Activated T-helper 1 cell treated with anti-CD3 and anti-CD28 coated beads, Interleukin-12 subunit alpha, Interleukin-12 subunit beta, Interleukin-2, Interleukin-4 antibody, amounts not matched to agents 30 ng/mL and 10 ng/mL and 1 ng/mL, durations not matched to agents 14 hours and 24 hours and 36 hours (primary cell): ENCODE measurements at regions of chr2 and their contacts with region 1.

Region 1: DNA sequence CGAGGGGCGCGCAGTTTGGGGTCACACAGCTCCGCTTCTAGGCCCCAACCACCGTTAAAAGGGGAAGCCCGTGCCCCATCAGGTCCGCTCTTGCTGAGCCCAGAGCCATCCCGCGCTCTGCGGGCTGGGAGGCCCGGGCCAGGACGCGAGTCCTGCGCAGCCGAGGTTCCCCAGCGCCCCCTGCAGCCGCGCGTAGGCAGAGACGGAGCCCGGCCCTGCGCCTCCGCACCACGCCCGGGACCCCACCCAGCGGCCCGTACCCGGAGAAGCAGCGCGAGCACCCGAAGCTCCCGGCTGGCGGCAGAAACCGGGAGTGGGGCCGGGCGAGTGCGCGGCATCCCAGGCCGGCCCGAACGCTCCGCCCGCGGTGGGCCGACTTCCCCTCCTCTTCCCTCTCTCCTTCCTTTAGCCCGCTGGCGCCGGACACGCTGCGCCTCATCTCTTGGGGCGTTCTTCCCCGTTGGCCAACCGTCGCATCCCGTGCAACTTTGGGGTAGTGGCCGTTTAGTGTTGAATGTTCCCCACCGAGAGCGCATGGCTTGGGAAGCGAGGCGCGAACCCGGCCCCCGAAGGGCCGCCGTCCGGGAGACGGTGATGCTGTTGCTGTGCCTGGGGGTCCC is at the start of gene ITGA4:
- DNase-seq: peak; percentile 85
- H3K4me3 Mint-ChIP-seq: peak within 1 kb of the TSS; percentile 98
- H3K27ac Mint-ChIP-seq: peak within 1 kb of the TSS; percentile 96
- H3K4me1 Mint-ChIP-seq: peaks cover 75% of the 10 kb centered on the region
- H3K27me3 Mint-ChIP-seq: no peaks in the 10 kb centered on the region
- total RNA-seq, gene ITGA4: 98.5 and 118 TPM in 2 replicates

Region 2: DNA sequence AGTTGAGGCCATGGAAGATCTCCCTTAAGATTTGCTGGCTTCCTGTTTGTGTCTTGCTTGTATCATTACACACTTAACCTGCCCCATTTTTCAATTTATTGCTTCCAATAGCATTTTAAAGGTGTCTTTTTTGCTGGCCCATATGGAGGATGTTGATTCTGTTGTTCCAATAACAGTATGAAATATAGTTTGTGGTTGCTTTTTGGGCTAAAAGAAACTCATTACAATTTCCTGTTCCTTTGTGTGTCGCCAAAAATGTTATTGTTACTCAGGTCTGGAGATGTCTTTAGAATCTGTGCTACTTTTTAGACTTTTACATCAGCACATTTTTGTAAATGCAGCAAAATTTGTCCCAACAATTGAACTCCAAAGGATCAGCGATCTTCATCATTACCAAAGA is 234.0 kb before region 1 on chr2:
- intact Hi-C with region 1: loop called (anchors 2 kb)
- DNase-seq: no peak
- H3K4me3 Mint-ChIP-seq: peak overlapping the region; percentile 34
- H3K27ac Mint-ChIP-seq: peak overlapping the region; percentile 93
- H3K4me1 Mint-ChIP-seq: peaks cover 31% of the 10 kb centered on the region
- H3K27me3 Mint-ChIP-seq: no peaks in the 10 kb centered on the region

Region 3: GRCh38 chr2:181312515-181312927 is 144.7 kb before region 1 on chr2:
- intact Hi-C with region 1: loop called (anchors 1 kb)
- DNase-seq: peak; percentile 44
- H3K4me3 Mint-ChIP-seq: peak overlapping the region; percentile 84
- H3K27ac Mint-ChIP-seq: peak overlapping the region; percentile 99
- H3K4me1 Mint-ChIP-seq: peaks cover 60% of the 10 kb centered on the region
- H3K27me3 Mint-ChIP-seq: no peaks in the 10 kb centered on the region

Region 4: DNA sequence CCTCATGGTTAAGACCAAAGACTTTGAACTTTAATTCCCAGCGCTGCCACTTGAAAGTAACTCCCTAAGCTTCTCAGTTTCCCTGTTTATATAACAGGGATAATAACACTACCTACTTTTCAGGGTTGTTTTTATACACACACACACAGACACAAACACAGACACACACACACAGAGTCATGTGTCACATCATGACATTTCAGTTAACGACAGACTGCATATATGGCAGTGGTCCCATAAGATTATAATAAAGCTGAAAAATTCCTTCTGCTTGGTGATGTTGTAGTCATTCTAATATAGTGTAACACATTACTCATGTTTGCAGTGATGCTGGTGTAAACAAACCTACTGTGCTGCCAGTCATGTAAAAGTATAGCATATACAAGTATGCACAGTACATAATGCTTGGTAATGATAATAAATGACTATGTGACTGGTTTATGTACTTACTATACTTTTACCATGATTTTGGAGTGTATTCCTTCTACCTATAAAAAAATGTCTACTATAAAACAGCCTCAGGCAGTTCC is 89.3 kb before region 1 on chr2:
- intact Hi-C with region 1: no loop called
- DNase-seq: no peak
- H3K4me3 Mint-ChIP-seq: no peak overlapping the region
- H3K27ac Mint-ChIP-seq: no peak overlapping the region
- H3K4me1 Mint-ChIP-seq: peaks cover 7% of the 10 kb centered on the region
- H3K27me3 Mint-ChIP-seq: no peaks in the 10 kb centered on the region

Region 5: GRCh38 chr2:181420259-181421130 is 36.7 kb before region 1 on chr2:
- intact Hi-C with region 1: loop called (anchors 5 kb)
- DNase-seq: no peak
- H3K4me3 Mint-ChIP-seq: no peak overlapping the region
- H3K27ac Mint-ChIP-seq: peak overlapping the region; percentile 69
- H3K4me1 Mint-ChIP-seq: peaks cover 19% of the 10 kb centered on the region
- H3K27me3 Mint-ChIP-seq: no peaks in the 10 kb centered on the region

Region 6: GRCh38 chr2:181790716-181791649 is 333.8 kb after region 1 on chr2:
- intact Hi-C with region 1: loop called (anchors 1 kb)
- DNase-seq: peak; percentile 3
- H3K4me3 Mint-ChIP-seq: no peak overlapping the region
- H3K27ac Mint-ChIP-seq: peak overlapping the region; percentile 38
- H3K4me1 Mint-ChIP-seq: peaks cover 33% of the 10 kb centered on the region
- H3K27me3 Mint-ChIP-seq: no peaks in the 10 kb centered on the region